CD14-positive monocyte (primary cell): ENCODE measurements at regions of chr19 and their contacts with region 1.

Region 1: DNA sequence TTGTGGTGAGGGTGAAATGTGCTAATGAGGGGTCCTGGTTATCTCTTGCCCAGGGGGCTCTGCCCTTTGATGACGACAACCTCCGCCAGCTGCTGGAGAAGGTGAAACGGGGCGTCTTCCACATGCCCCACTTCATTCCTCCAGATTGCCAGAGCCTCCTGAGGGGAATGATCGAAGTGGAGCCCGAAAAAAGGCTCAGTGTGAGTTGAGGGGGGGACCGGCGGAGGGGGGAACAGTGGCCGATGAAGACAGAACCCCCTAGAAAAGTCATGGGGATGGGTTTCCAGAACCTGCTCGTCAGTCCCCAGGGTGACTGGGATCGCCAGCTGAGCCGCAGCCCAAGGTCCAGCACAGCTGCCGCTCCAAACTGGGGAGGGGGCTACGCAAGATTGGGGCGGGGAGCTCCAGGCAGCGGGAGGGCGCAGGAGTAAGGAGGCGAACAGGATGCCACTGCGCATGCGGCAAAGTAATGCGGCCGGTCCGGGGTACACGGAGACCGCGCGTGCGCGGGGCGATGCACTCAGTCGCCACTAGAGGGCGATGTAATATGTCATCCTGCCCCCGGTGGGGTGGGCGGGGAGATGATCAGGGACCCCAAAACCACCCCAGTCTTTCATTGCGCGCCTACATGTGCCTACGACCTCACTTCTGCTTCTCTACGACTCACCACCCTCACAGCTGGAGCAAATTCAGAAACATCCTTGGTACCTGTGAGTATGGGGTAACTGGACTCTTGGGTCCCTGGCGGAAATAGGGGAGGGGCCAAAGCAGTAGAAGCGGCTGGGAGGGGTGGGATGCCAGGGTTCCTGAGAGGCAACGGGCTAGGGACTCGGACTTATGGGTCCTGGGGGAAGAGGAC is 17.9 kb downstream of the BRSK1 start:
- DNase-seq: peak; percentile 78 to 92 (median 85)
- H3K4me3 ChIP-seq: peak overlapping the region in 2 of 3 experiments; percentile 26 to 65
- H3K4me3 Mint-ChIP-seq: peak overlapping the region; percentile 66 to 79
- H3K27ac ChIP-seq: no peak overlapping the region
- H3K27ac Mint-ChIP-seq: peak overlapping the region in 3 of 7 donors; percentile 25 to 72 (median 30)
- H3K4me1 ChIP-seq: peaks cover 10 to 12% of the 10 kb centered on the region in 2 donors
- H3K4me1 Mint-ChIP-seq: peaks cover 13% of the 10 kb centered on the region
- H3K27me3 ChIP-seq: no peaks in the 10 kb centered on the region
- H3K27me3 Mint-ChIP-seq: peaks cover 0 to 13% (median 3%) of the 10 kb centered on the region in 3 donors
- CTCF ChIP-seq: peak; percentile 95

Region 2: DNA sequence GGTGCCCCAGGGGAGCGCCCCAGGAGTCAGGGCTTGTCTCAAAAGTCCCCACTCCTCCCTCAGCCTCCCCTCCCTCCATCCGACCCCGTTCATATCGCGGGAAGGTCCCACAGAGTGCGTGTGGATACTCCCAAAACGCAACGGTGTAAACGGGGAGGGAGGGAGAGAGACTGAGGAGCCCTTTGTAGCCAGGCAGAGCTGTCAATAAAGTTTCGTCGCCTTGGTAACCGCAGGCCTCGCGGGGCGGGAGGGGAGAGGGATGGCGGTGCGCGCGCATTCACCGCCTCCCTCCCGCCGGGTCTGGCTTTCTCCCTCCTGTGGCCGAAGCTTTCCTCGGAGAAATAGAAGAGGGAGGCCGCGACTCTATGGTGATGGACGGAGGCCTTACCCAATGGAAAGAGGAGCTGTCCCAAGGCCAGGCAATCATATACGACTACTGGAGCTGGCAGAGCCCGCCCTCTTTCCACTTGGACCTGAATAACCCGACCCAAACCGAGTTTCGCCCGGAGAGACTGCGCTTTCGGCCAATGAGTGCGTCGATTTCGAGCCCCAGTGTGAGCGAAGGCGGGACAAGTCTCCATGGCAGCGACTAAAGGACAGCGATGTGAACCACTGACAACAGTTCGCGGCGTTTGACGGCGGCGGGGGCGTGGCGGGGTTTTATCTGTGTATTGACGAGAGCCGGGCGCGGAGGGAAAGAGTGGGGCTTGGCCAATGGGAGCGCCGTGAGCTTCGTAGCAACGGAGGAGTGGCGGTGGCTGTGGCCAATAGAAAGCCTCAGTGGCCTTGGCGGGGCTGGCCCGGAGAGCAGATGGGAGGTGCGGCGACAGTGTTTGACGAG is 37.6 kb after region 1 on chr19 and contains the start of gene KMT5C:
- intact Hi-C with region 1: loop called (anchors 5 kb)
- DNase-seq: peak; percentile 100
- H3K4me3 ChIP-seq: peak within 1 kb of the TSS; percentile 48 to 83 (median 69)
- H3K4me3 Mint-ChIP-seq: peak within 1 kb of the TSS; percentile 82 to 90
- H3K27ac ChIP-seq: peak within 1 kb of the TSS; percentile 97 to 99
- H3K27ac Mint-ChIP-seq: peak within 1 kb of the TSS; percentile 97 to 99 (median 99)
- H3K4me1 ChIP-seq: peaks cover 31 to 39% of the 10 kb centered on the region in 2 donors
- H3K4me1 Mint-ChIP-seq: peaks cover 27% of the 10 kb centered on the region
- H3K27me3 ChIP-seq: no peaks in the 10 kb centered on the region
- H3K27me3 Mint-ChIP-seq: peaks cover 0 to 5% (median 2%) of the 10 kb centered on the region in 3 donors
- CTCF ChIP-seq: peak; percentile 12
- polyA plus RNA-seq, gene KMT5C: 0.89 to 26.9 (median 1.5) TPM

Region 3: DNA sequence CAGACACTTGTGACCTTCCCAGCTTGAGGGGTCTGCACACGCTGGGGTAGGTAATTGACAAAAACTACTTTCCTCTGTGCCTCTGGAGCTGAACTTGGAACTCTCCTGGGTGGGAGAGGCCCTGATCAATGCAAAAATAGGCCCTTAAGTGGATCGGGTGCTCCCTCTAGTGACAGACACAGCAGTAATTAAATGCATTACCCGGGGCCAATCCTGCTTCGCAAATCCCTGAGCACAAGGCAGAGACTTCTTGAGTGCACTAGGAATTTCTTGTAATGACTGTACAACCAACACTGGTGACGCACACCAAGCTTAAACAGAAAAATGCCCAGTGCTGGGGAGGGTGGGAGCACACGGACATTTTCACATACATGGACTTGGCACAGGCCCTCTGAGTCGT is 116.5 kb after region 1 on chr19:
- intact Hi-C with region 1: loop called in 1 of 2 experiments (anchors 10 kb)
- DNase-seq: peak in 2 of 3 donors; percentile 43 to 60
- H3K4me3 ChIP-seq: no peak overlapping the region
- H3K4me3 Mint-ChIP-seq: no peak overlapping the region
- H3K27ac ChIP-seq: no peak overlapping the region
- H3K27ac Mint-ChIP-seq: peak overlapping the region in 3 of 7 donors; percentile 11 to 68 (median 54)
- H3K4me1 ChIP-seq: peaks cover 8 to 11% of the 10 kb centered on the region in 2 donors
- H3K4me1 Mint-ChIP-seq: peaks cover 11% of the 10 kb centered on the region
- H3K27me3 ChIP-seq: no peaks in the 10 kb centered on the region
- H3K27me3 Mint-ChIP-seq: peaks cover 2 to 15% (median 6%) of the 10 kb centered on the region in 3 donors
- CTCF ChIP-seq: peak; percentile 72

Region 4: GRCh38 chr19:55437410-55438075 is 135.9 kb after region 1 on chr19:
- intact Hi-C with region 1: no loop called
- DNase-seq: no peak
- H3K4me3 ChIP-seq: no peak overlapping the region
- H3K4me3 Mint-ChIP-seq: no peak overlapping the region
- H3K27ac ChIP-seq: no peak overlapping the region
- H3K27ac Mint-ChIP-seq: no peak overlapping the region
- H3K4me1 ChIP-seq: peaks cover 21 to 24% of the 10 kb centered on the region in 2 donors
- H3K4me1 Mint-ChIP-seq: peaks cover 19% of the 10 kb centered on the region
- H3K27me3 ChIP-seq: peaks cover 17 to 52% of the 10 kb centered on the region in 2 donors
- H3K27me3 Mint-ChIP-seq: peaks cover 33 to 54% (median 51%) of the 10 kb centered on the region in 3 donors
- CTCF ChIP-seq: no peak

Region 5: DNA sequence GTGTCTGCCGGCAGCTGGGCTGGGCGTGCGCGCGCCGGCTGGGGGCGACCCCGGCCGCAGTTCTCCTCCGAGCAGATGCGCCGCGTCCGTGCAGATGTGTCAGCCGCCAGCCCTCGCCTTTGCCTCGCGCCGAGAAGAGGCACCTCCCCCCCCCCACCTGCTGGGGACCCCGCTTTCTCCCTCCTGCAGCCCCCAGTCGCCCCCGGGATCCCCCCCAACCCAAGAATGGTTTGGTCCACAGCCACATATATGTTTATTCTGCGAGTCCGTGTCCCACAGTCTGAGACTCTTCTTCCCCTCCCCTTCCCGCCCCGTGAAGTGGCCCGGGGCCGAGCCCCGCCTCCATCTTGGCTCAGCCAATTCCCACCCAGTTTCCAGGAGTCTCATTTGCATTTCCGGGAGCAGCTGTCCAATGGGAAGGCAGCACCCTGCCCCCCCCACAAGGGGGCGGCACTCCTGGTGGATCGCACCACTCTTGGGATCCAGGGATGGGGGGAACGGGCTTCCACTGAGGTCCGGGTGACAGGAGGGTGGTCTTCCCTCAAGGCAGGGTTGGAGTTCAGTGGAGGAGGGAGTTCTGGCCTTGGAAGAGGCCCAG is 151.2 kb after region 1 on chr19:
- intact Hi-C with region 1: loop called in 1 of 2 experiments (anchors 10 kb)
- DNase-seq: peak in 2 of 3 donors; percentile 24 to 38
- H3K4me3 ChIP-seq: no peak overlapping the region
- H3K4me3 Mint-ChIP-seq: peak overlapping the region in 1 of 2 donors; percentile 9
- H3K27ac ChIP-seq: no peak overlapping the region
- H3K27ac Mint-ChIP-seq: no peak overlapping the region
- H3K4me1 ChIP-seq: peaks cover 5 to 10% of the 10 kb centered on the region in 2 donors
- H3K4me1 Mint-ChIP-seq: peaks cover 6% of the 10 kb centered on the region
- H3K27me3 ChIP-seq: peaks cover 10 to 38% of the 10 kb centered on the region in 2 donors
- H3K27me3 Mint-ChIP-seq: peaks cover 27 to 36% (median 29%) of the 10 kb centered on the region in 3 donors
- CTCF ChIP-seq: no peak